ENCODE measurements at regions of chr6 and their contacts with region 1.

Region 1: DNA sequence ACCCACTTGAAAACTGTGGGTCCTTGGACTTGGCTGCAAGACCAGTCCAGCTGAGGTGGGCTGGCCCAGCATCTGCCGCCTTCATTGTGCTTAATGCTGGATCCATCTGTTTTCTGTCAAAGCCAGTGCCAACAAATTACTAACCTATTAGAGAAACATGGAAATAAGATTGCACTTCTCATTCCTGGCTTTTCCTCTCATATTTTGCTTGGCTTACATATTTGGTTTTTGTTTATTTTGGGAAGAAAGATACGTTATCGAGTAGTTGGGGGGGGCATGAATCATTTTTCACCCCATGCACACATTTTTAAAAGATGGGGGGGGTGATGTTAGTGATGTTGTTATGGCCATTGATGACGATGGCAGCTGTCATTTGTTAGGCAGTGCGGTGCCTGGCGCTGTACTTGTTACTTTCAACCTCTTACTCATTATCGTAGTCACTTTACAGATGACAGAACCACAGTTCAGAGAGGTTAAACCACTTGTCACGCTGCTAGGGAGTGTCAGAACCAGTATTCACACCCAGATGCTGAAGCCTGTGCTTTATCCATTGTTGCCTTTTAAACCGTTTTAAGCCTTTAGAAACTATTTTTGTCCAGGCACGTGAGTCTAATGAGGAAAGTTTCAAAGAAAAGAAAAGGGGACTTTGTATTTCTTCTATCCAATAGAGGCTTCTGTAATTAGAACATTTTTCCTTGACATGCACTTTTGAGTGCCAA is 180.0 kb downstream of the TMEM242 start:
- DNase-seq: no peak
- H3K4me3 ChIP-seq: no peak overlapping the region
- H3K27ac ChIP-seq: no peak overlapping the region
- H3K4me1 ChIP-seq: peaks cover 5 to 17% (median 13%) of the 10 kb centered on the region in 4 experiments
- H3K27me3 ChIP-seq: no peaks in the 10 kb centered on the region
- CTCF ChIP-seq: no peak
- EP300 ChIP-seq: no peak
- POLR2A ChIP-seq: no peak
- RAD21 ChIP-seq: no peak

Region 2: DNA sequence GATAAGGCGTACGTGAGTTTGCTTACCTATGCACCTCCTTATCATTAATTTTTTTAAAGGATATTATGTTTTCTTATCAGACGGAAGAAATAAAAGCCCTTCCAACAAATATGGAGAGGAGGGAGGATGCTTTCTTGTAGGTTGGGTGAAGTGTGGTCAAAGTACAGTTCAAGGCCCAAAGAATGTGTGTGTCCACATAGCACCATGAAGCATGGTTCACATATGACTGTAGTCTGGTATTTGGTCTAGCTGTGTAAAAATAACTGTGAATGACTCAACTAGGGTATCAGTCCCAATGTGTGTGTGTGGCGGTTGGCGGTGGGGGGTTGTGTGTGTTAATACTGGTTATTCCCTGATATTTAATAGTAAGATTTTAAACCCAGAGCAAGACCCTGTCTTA is 32.7 kb before region 1 on chr6:
- CTCF ChIA-PET with region 1: interaction called, 10 read pairs
- POLR2A ChIA-PET with region 1: no interaction called
- DNase-seq: no peak
- H3K4me3 ChIP-seq: no peak overlapping the region
- H3K27ac ChIP-seq: no peak overlapping the region
- H3K4me1 ChIP-seq: no peaks in the 10 kb centered on the region
- H3K27me3 ChIP-seq: no peaks in the 10 kb centered on the region
- CTCF ChIP-seq: no peak
- EP300 ChIP-seq: no peak
- POLR2A ChIP-seq: no peak
- RAD21 ChIP-seq: no peak

Region 3: DNA sequence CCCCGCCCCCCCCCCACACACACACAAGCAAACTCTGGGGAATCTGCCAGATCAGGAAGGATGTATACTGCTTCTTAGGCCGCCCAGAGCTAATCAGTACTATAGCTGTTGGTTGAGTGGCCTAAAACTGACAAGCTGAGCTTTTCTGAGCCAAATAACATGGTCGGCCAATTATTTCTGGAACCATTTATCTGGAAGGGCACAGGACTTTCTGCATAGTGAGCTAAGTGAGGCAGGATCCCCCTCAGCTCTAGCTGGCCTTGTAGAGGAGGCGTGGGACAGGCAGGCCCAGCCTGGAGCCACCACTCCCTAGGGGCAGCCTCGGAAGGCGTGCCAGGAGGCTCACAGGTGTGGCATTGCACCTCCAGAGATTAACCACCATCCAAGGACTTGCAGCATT is 20.1 kb before region 1 on chr6:
- CTCF ChIA-PET with region 1: interaction called, 11 read pairs
- POLR2A ChIA-PET with region 1: no interaction called
- DNase-seq: no peak
- H3K4me3 ChIP-seq: no peak overlapping the region
- H3K27ac ChIP-seq: no peak overlapping the region
- H3K4me1 ChIP-seq: peaks cover 0 to 4% (median 1%) of the 10 kb centered on the region in 4 experiments; a peak in 2 of 7 replicates
- H3K27me3 ChIP-seq: no peaks in the 10 kb centered on the region
- CTCF ChIP-seq: no peak
- EP300 ChIP-seq: no peak
- POLR2A ChIP-seq: no peak
- RAD21 ChIP-seq: no peak

Region 4: GRCh38 chr6:157184202-157185020 is 41.1 kb after region 1 on chr6:
- CTCF ChIA-PET with region 1: interaction called, 128 read pairs
- POLR2A ChIA-PET with region 1: interaction called, 3 read pairs
- DNase-seq: peak; percentile 57 to 87
- H3K4me3 ChIP-seq: no peak overlapping the region
- H3K27ac ChIP-seq: no peak overlapping the region
- H3K4me1 ChIP-seq: no peaks in the 10 kb centered on the region
- H3K27me3 ChIP-seq: no peaks in the 10 kb centered on the region
- CTCF ChIP-seq: peak; percentile 86 to 96 (median 93)
- EP300 ChIP-seq: no peak
- POLR2A ChIP-seq: no peak
- RAD21 ChIP-seq: peak; percentile 98 to 99